ENCODE measurements at regions of chr4 and their contacts with region 1.

Region 1: GRCh38 chr4:28842281-28842680 is 1877.9 kb upstream of the PCDH7 start:
- DNase-seq: no peak
- ATAC-seq: no peak
- H3K4me3 Mint-ChIP-seq: no peak overlapping the region
- H3K27ac Mint-ChIP-seq: no peak overlapping the region
- H3K4me1 Mint-ChIP-seq: no peaks in the 10 kb centered on the region
- H3K27me3 Mint-ChIP-seq: no peaks in the 10 kb centered on the region
- CTCF ChIP-seq: no peak

Region 2: DNA sequence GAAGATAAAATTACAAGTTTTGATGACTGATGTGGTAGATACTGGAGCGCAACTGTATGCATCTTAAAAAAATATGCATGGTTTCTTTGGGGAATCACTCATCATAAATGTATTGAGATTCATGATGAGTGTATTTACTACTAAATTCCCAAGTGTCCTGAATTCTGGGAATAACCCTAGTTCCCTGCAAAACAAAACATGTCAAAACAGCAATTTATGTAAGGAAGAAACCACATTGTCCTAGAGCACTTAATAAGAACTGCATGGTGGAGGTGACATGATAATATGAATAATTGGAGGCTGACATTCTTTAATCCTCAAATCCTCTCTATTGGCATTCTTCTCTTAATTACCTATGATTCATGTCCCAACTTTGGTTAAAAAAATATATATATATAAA is 177.0 kb before region 1 on chr4:
- CTCF ChIA-PET with region 1: no interaction called
- POLR2A ChIA-PET with region 1: no interaction called
- DNase-seq: no peak
- ATAC-seq: no peak
- H3K4me3 Mint-ChIP-seq: no peak overlapping the region
- H3K27ac Mint-ChIP-seq: no peak overlapping the region
- H3K4me1 Mint-ChIP-seq: no peaks in the 10 kb centered on the region
- H3K27me3 Mint-ChIP-seq: no peaks in the 10 kb centered on the region
- CTCF ChIP-seq: no peak

Region 3: DNA sequence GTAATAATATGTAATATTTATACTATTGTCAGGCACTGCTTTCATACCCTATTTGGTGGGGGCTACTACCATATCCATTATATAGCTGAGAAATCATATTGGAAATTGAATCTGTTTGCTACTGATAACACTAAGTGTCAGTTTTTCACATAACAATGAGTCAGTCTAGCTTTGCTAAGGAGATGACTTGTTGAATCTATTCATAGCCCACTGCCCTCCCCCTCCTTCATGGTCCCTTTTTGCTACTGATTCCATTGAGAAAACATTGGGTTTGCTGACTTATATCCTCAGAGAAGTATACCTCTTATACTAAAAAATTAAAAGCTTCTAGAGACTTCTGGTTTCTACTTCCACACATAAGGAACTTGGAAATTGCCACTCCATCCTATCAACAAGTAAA is 83.2 kb before region 1 on chr4:
- CTCF ChIA-PET with region 1: no interaction called
- POLR2A ChIA-PET with region 1: no interaction called
- DNase-seq: no peak
- ATAC-seq: no peak
- H3K4me3 Mint-ChIP-seq: no peak overlapping the region
- H3K27ac Mint-ChIP-seq: no peak overlapping the region
- H3K4me1 Mint-ChIP-seq: peaks cover 19% of the 10 kb centered on the region
- H3K27me3 Mint-ChIP-seq: no peaks in the 10 kb centered on the region
- CTCF ChIP-seq: no peak

Region 4: GRCh38 chr4:28799696-28800095 is 42.6 kb before region 1 on chr4:
- CTCF ChIA-PET with region 1: no interaction called
- POLR2A ChIA-PET with region 1: interaction called, 10 read pairs
- DNase-seq: no peak
- ATAC-seq: no peak
- H3K4me3 Mint-ChIP-seq: no peak overlapping the region
- H3K27ac Mint-ChIP-seq: no peak overlapping the region
- H3K4me1 Mint-ChIP-seq: peaks cover 22% of the 10 kb centered on the region
- H3K27me3 Mint-ChIP-seq: no peaks in the 10 kb centered on the region; the same call in 1 of the 2 replicates
- CTCF ChIP-seq: no peak

Measured in WTC11 (cell line).